Thyroid gland (tissue), 4 donors: ENCODE measurements at regions of chr3 and their contacts with region 1.

Region 1: GRCh38 chr3:197511130-197511529 is 44.6 kb downstream of the BDH1 start:
- DNase-seq: no peak
- H3K4me3 ChIP-seq: no peak overlapping the region
- H3K27ac ChIP-seq: no peak overlapping the region
- H3K4me1 ChIP-seq: peaks cover 16 to 39% of the 10 kb centered on the region in 2 donors
- H3K27me3 ChIP-seq: no peaks in the 10 kb centered on the region
- CTCF ChIP-seq: no peak
- POLR2A ChIP-seq: no peak

Region 2: GRCh38 chr3:197256836-197257444 is 254.2 kb before region 1 on chr3:
- intact Hi-C with region 1: loop called (anchors 5 kb)
- DNase-seq: peak; percentile 29 to 31
- H3K4me3 ChIP-seq: no peak overlapping the region
- H3K27ac ChIP-seq: no peak overlapping the region
- H3K4me1 ChIP-seq: peaks cover 25 to 49% of the 10 kb centered on the region in 2 donors
- H3K27me3 ChIP-seq: no peaks in the 10 kb centered on the region
- CTCF ChIP-seq: peak in 5 of 6 experiments; percentile 43 to 76 (median 58)
- POLR2A ChIP-seq: no peak